Calu3 (cell line): ENCODE measurements at regions of chr17 and their contacts with region 1.

Region 1: GRCh38 chr17:38485146-38485468 is 56.8 kb downstream of the ARHGAP23 start:
- DNase-seq: no peak
- H3K4me3 Mint-ChIP-seq: no peak overlapping the region
- H3K27ac Mint-ChIP-seq: peak overlapping the region; percentile 0
- H3K4me1 Mint-ChIP-seq: peaks cover 23% of the 10 kb centered on the region
- H3K27me3 Mint-ChIP-seq: no peaks in the 10 kb centered on the region
- CTCF ChIP-seq: peak; percentile 20

Region 2: GRCh38 chr17:38421171-38421841 is 63.8 kb before region 1 on chr17:
- CTCF ChIA-PET with region 1: interaction called, 15 read pairs
- intact Hi-C with region 1: loop called (anchors 1 kb)
- DNase-seq: no peak
- H3K4me3 Mint-ChIP-seq: no peak overlapping the region
- H3K27ac Mint-ChIP-seq: no peak overlapping the region
- H3K4me1 Mint-ChIP-seq: peaks cover 29% of the 10 kb centered on the region
- H3K27me3 Mint-ChIP-seq: peaks cover 98% of the 10 kb centered on the region
- CTCF ChIP-seq: no peak

Region 3: DNA sequence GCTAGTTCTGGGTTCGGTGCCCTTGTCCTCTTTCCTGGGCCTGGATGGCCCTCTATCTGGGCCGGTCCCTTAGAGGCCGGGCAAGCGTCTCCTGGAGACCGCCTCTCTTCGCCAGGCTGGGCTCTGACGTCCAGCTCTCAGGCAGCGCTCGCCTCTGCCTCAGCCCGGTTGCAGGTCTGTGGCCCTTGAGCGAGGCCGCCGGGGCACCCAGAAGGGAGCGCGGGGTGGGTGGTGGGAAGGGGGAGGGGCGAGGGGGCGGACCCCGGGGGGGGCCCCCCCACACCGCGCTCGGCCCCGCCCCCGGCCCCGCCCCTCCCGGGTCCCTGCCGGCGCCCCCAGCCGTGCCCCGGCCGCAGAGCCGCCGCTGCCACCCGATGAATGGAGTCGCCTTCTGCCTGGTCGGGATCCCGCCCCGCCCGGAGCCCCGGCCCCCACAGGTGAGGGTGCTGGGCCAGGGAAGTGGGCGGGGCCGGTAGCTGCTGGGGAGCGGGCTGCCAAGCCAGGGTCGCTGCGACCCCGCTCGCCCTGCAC is 56.9 kb before region 1 on chr17 and contains the start of gene ARHGAP23:
- CTCF ChIA-PET with region 1: interaction called, 15 read pairs
- intact Hi-C with region 1: loop called (anchors 1 kb)
- DNase-seq: peak; percentile 78
- H3K4me3 Mint-ChIP-seq: peak within 1 kb of the TSS; percentile 70
- H3K27ac Mint-ChIP-seq: peak within 1 kb of the TSS; percentile 56
- H3K4me1 Mint-ChIP-seq: peaks cover 14% of the 10 kb centered on the region
- H3K27me3 Mint-ChIP-seq: peaks cover 68% of the 10 kb centered on the region
- CTCF ChIP-seq: peak; percentile 11
- total RNA-seq, gene ARHGAP23: 140 and 304 TPM in 2 replicates

Region 4: DNA sequence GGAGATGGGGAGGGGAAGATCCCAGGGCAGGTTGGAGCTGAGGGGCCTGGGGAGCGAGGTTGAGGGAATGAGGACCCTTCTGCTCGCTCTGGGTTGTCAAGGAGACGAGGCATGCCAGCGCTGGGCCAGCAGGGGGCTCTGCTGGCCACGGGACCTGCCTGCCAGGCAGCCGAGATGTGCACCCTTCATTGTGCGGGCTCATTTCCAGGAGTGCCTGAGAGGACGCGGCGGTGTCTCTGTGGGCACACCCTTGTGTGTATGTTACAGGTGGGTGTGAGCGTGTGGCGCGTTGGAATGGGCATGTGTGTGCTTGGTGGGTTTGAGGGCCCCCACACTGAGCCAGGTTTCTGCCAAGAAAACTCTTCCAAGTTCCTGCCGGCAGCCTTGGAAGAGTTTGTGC is 41.0 kb before region 1 on chr17:
- CTCF ChIA-PET with region 1: interaction called, 4 read pairs
- intact Hi-C with region 1: loop called (anchors 1 kb)
- DNase-seq: peak; percentile 96
- H3K4me3 Mint-ChIP-seq: peak overlapping the region; percentile 1
- H3K27ac Mint-ChIP-seq: no peak overlapping the region
- H3K4me1 Mint-ChIP-seq: peaks cover 36% of the 10 kb centered on the region
- H3K27me3 Mint-ChIP-seq: peaks cover 30% of the 10 kb centered on the region
- CTCF ChIP-seq: peak; percentile 100

Region 5: GRCh38 chr17:38539386-38539785 is 54.3 kb after region 1 on chr17:
- CTCF ChIA-PET with region 1: no interaction called
- intact Hi-C with region 1: loop called (anchors 5 kb)
- DNase-seq: no peak
- H3K4me3 Mint-ChIP-seq: no peak overlapping the region
- H3K27ac Mint-ChIP-seq: no peak overlapping the region
- H3K4me1 Mint-ChIP-seq: no peaks in the 10 kb centered on the region
- H3K27me3 Mint-ChIP-seq: peaks cover 75% of the 10 kb centered on the region
- CTCF ChIP-seq: no peak

Region 6: DNA sequence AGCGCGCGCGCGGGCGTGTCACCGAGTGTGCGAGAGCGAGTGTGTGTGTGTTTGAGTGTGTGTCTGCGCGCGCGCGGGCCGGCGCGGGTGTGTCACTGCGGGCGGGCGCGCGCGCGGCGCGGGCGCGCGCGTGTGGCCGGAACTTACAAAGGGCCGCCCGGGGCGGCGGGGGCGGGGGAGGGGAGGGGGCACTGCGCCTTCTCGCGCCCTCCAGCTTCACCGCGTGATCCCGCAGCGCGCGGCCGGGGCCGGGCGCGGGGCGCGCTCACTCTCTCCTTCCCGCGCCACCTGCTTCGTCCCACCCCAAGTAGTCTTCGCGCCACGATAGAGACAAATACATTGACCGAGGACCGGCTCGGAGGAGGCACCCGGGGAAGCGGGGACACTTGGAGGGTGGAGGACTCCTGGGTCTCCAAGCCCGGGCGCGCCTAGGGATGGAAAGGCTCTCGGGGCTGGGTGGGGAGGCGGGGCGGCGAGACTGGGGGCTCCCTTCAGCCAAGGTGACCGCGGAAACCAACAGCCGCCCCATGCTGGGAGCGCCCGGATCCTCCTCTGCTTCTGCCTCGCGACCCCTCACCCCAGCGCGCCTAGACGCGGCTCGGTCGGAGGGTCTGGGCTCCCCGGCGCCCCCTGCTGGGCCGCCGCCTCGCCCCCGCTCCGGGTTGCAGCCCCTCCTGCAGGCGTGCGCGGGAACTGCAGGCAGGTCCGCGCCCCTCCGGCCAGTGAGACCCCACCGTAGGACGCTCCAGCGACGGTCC is 121.0 kb after region 1 on chr17 and contains the start of gene SRCIN1:
- CTCF ChIA-PET with region 1: no interaction called
- intact Hi-C with region 1: no loop called
- DNase-seq: peak; percentile 91
- H3K4me3 Mint-ChIP-seq: peak within 1 kb of the TSS; percentile 74
- H3K27ac Mint-ChIP-seq: peak within 1 kb of the TSS; percentile 48
- H3K4me1 Mint-ChIP-seq: peaks cover 31% of the 10 kb centered on the region
- H3K27me3 Mint-ChIP-seq: peaks cover 99% of the 10 kb centered on the region
- CTCF ChIP-seq: peak; percentile 100
- total RNA-seq, gene SRCIN1: 46.6 and 46.7 TPM in 2 replicates